HepG2 (cell line): ENCODE measurements at regions of chr2 and their contacts with region 1.

Region 1: DNA sequence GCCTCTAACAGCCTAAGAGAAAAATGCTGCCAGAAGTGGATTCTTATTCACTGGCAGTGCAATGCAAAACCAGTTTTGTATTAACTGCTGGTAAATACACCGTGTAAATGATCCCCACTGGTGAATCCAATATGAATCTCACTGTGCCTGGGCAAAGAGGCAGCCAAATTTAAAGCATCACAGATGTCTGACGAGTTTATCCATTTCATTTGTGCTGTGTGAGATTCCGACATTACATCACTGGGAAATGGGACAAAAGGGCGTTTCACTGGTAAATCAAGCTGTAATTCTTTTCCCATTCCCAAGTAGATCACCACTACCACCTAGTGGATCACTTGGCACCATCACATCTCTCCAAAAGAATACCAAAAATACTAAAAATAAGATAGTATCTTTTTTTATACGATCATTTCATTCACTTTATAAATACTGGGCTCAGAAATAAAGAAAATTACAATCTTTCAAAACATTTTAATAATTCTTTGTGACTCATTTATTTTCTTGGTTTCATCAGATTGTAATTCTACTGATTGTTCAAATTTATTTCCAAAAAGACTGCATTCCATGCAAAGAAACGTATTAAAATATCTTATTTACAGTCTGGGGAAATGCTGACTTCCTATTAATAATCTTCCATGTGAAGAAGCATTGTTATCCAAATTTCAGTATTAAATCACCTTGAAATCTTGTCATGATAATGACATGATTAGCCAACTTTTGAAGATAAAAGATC is 125.6 kb downstream of the GRB14 start:
- DNase-seq: peak; percentile 65
- ATAC-seq: peak; percentile 92
- H3K4me3 ChIP-seq: no peak overlapping the region
- H3K27ac ChIP-seq: no peak overlapping the region
- H3K4me1 ChIP-seq: no peaks in the 10 kb centered on the region
- H3K27me3 ChIP-seq: no peaks in the 10 kb centered on the region
- CTCF ChIP-seq: peak; percentile 65
- EP300 ChIP-seq: no peak
- POLR2A ChIP-seq: no peak
- RAD21 ChIP-seq: no peak; the same call in 1 of the 2 replicates

Region 2: DNA sequence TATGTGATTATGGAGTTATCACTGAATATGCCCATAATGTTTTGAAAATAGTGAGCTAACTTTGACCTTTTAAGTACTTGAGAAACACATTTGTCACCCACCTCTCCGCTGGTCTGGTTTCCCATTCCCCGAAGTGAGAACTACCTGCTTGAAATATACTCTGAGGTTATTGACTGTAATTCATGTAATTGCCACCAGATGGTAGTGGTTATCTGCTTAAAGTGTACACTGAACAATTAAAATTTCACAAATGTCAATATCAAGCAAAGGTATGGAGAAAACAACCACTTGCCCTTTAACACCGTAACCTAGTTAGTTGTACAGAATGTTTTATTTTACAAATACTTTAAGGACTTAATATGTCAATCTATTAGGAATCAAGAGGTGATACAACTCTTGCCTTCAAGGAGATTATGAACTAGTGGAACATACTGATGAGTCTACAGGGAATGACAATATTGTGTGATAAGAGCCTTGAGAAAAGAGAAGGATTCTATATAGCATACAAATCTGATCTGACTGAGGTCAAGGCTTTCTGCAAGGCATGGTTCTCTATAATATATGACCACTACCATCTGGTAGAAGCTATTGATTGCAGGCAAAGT is 1340.3 kb before region 1 on chr2:
- CTCF ChIA-PET with region 1: interaction called, 5 read pairs
- POLR2A ChIA-PET with region 1: no interaction called
- in situ Hi-C with region 1: no loop called
- intact Hi-C with region 1: loop called (anchors 10 kb)
- DNase-seq: peak; percentile 38
- ATAC-seq: peak; percentile 90
- H3K4me3 ChIP-seq: no peak overlapping the region
- H3K27ac ChIP-seq: no peak overlapping the region
- H3K4me1 ChIP-seq: no peaks in the 10 kb centered on the region
- H3K27me3 ChIP-seq: no peaks in the 10 kb centered on the region
- CTCF ChIP-seq: peak; percentile 66
- EP300 ChIP-seq: no peak
- POLR2A ChIP-seq: no peak
- RAD21 ChIP-seq: no peak

Region 3: DNA sequence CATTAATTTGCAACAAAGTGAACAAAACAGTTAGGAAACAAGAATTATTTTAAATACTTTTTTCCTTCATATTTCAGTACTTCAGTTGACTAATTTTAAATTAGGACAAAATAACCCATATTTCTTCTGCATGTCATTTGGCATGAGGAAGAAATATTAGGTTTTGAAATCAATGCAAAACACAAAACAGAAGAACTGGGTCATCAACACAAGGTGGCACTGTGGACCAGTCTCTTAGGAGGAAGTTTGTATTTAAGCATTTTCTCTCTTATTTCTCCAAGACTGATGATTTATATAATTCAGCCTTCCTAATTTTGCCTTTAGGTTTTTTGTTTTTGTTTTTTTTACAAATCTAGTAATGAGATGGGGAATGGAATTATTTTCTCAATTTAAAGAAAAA is 1304.3 kb before region 1 on chr2:
- CTCF ChIA-PET with region 1: interaction called, 9 read pairs
- POLR2A ChIA-PET with region 1: no interaction called
- in situ Hi-C with region 1: loop called (anchors 10 kb)
- intact Hi-C with region 1: loop called (anchors 1 kb)
- DNase-seq: peak; percentile 24
- ATAC-seq: peak; percentile 43; the same call in 1 of the 3 replicates
- H3K4me3 ChIP-seq: no peak overlapping the region
- H3K27ac ChIP-seq: no peak overlapping the region
- H3K4me1 ChIP-seq: no peaks in the 10 kb centered on the region
- H3K27me3 ChIP-seq: no peaks in the 10 kb centered on the region
- CTCF ChIP-seq: peak; percentile 65
- EP300 ChIP-seq: no peak
- POLR2A ChIP-seq: no peak
- RAD21 ChIP-seq: peak; percentile 27; the same call in 1 of the 2 replicates

Region 4: GRCh38 chr2:163943403-163944346 is 552.0 kb before region 1 on chr2:
- CTCF ChIA-PET with region 1: no interaction called
- POLR2A ChIA-PET with region 1: no interaction called
- in situ Hi-C with region 1: no loop called
- intact Hi-C with region 1: loop called (anchors 10 kb)
- DNase-seq: peak; percentile 96
- ATAC-seq: peak; percentile 99
- H3K4me3 ChIP-seq: peak overlapping the region in 1 of 3 experiments; percentile 8; a peak in 3 of 6 replicates
- H3K27ac ChIP-seq: peak overlapping the region; percentile 51
- H3K4me1 ChIP-seq: peaks cover 29% of the 10 kb centered on the region
- H3K27me3 ChIP-seq: no peaks in the 10 kb centered on the region
- CTCF ChIP-seq: no peak
- EP300 ChIP-seq: peak in 1 of 2 experiments; percentile 72; a peak in 2 of 4 replicates
- POLR2A ChIP-seq: no peak
- RAD21 ChIP-seq: no peak

Region 5: GRCh38 chr2:164126960-164127637 is 368.6 kb before region 1 on chr2:
- CTCF ChIA-PET with region 1: no interaction called
- POLR2A ChIA-PET with region 1: no interaction called
- in situ Hi-C with region 1: no loop called
- intact Hi-C with region 1: loop called (anchors 1 kb)
- DNase-seq: no peak
- ATAC-seq: 0 out of 3 replicates have a peak, but pooled peaks have one; percentile 38
- H3K4me3 ChIP-seq: no peak overlapping the region
- H3K27ac ChIP-seq: no peak overlapping the region
- H3K4me1 ChIP-seq: no peaks in the 10 kb centered on the region
- H3K27me3 ChIP-seq: no peaks in the 10 kb centered on the region
- CTCF ChIP-seq: no peak
- EP300 ChIP-seq: no peak
- POLR2A ChIP-seq: no peak
- RAD21 ChIP-seq: no peak

Region 6: DNA sequence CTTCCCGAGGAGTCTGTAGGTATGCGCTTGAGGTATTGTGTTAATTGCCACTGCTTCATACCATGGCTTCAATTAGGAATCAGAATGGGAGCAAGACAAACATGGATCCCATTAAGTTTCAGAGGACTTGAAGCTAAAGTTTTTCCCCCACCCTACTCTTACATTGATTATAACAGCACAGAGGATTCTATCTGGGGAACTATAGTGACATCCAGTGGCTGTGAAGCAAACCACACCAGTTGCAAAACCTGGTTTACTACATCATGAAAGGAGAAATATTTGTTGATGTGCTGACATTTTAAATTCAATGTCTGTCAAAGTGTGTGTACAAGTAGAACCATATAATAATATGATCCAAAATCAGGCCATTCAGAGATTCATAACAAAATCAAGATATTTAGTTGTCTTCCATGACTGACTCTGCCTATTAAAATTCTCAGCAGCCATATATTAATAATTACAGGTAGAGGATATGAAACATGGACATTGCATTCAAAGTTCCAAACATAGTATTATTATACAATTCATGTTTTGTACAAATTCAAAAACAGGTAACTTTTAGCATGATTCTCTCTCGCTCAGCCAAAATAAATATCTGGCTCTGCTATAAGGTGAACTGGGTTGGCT is 42.7 kb after region 1 on chr2:
- CTCF ChIA-PET with region 1: no interaction called
- POLR2A ChIA-PET with region 1: no interaction called
- in situ Hi-C with region 1: loop called (anchors 5 kb)
- intact Hi-C with region 1: loop called (anchors 1 kb)
- DNase-seq: peak; percentile 65
- ATAC-seq: peak; percentile 97
- H3K4me3 ChIP-seq: no peak overlapping the region
- H3K27ac ChIP-seq: no peak overlapping the region
- H3K4me1 ChIP-seq: peaks cover 11% of the 10 kb centered on the region
- H3K27me3 ChIP-seq: no peaks in the 10 kb centered on the region
- CTCF ChIP-seq: peak; percentile 85
- EP300 ChIP-seq: no peak
- POLR2A ChIP-seq: no peak
- RAD21 ChIP-seq: peak; percentile 80